ENCODE measurements at regions of chr17 and their contacts with region 1.

Region 1: GRCh38 chr17:75405365-75406221 is at the start of gene GRB2:
- DNase-seq: peak; percentile 98
- ATAC-seq: peak; percentile 89
- H3K4me3 ChIP-seq: peak within 1 kb of the TSS; percentile 91 to 99 (median 99)
- H3K4me3 Mint-ChIP-seq: peak within 1 kb of the TSS; percentile 98
- H3K27ac ChIP-seq: peak within 1 kb of the TSS; percentile 79 to 92
- H3K27ac Mint-ChIP-seq: peak within 1 kb of the TSS; percentile 97
- H3K4me1 ChIP-seq: peaks cover 32 to 43% of the 10 kb centered on the region in 2 donors
- H3K4me1 Mint-ChIP-seq: peaks cover 39% of the 10 kb centered on the region
- H3K27me3 ChIP-seq: no peaks in the 10 kb centered on the region
- H3K27me3 Mint-ChIP-seq: no peaks in the 10 kb centered on the region
- CTCF ChIP-seq: no peak
- total RNA-seq, gene GRB2: 219 and 224 TPM in 2 replicates

Region 2: GRCh38 chr17:75271233-75271954 is 134.2 kb before region 1 on chr17:
- CTCF ChIA-PET with region 1: interaction called, 11 read pairs
- POLR2A ChIA-PET with region 1: interaction called, 7 read pairs
- intact Hi-C with region 1: loop called (anchors 1 kb)
- DNase-seq: peak; percentile 94
- ATAC-seq: peak; percentile 90
- H3K4me3 ChIP-seq: peak overlapping the region; percentile 26 to 93 (median 74)
- H3K4me3 Mint-ChIP-seq: peak overlapping the region; percentile 88
- H3K27ac ChIP-seq: peak overlapping the region; percentile 78 to 83
- H3K27ac Mint-ChIP-seq: peak overlapping the region; percentile 82
- H3K4me1 ChIP-seq: peaks cover 17 to 28% of the 10 kb centered on the region in 2 donors
- H3K4me1 Mint-ChIP-seq: peaks cover 23% of the 10 kb centered on the region
- H3K27me3 ChIP-seq: no peaks in the 10 kb centered on the region
- H3K27me3 Mint-ChIP-seq: no peaks in the 10 kb centered on the region
- CTCF ChIP-seq: peak; percentile 73

Region 3: DNA sequence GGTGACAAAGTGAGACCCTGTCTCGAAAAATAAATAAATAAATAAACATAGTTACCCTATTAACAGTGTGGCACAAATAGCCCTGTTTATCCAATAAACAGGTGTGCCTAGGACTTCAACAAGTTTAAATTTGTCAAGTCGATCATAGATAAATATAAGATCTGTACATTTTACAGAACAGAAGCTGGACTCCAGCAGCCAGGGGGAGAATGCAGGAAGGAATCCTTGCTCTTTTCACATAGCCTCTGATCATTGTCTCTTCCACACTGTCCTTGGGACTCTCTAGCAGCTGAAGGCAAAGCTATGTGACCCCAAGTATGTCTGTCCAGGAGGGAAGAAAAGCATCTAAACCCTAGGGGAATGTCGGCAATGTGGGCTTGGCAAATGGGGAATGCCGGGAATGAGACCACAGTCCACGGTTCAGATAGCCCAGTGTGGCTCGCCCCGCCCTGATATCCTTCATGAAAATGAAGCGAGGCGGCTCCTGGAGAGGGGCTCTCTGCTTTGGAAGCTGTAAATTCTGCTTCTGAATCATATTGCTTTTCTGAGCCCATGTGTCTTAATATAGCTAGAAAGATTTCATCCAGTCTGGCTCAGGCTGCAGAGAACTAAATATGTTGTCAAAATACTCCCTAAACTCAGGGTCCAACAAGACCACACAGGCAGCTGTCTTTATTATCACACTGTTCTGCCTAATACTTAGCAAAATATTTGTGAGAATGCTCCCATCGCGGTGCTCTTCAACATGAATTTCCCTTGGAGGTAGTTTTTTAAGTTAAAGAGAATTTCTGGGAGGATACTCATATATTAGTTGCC is 24.8 kb after region 1 on chr17:
- CTCF ChIA-PET with region 1: no interaction called
- POLR2A ChIA-PET with region 1: no interaction called
- intact Hi-C with region 1: no loop called
- DNase-seq: no peak
- ATAC-seq: no peak
- H3K4me3 ChIP-seq: no peak overlapping the region
- H3K4me3 Mint-ChIP-seq: no peak overlapping the region
- H3K27ac ChIP-seq: no peak overlapping the region
- H3K27ac Mint-ChIP-seq: no peak overlapping the region
- H3K4me1 ChIP-seq: peaks cover 6 to 7% of the 10 kb centered on the region in 2 donors
- H3K4me1 Mint-ChIP-seq: peaks cover 11% of the 10 kb centered on the region
- H3K27me3 ChIP-seq: peaks cover 0 to 4% (median 0%) of the 10 kb centered on the region in 4 experiments
- H3K27me3 Mint-ChIP-seq: peaks cover 15% of the 10 kb centered on the region
- CTCF ChIP-seq: no peak

Measured in B cell (primary cell).